Caco-2 (cell line): ENCODE measurements at regions of chr16 and their contacts with region 1.

Region 1: GRCh38 chr16:55944377-55944802 is 69.2 kb upstream of the CES5A start:
- DNase-seq: peak; percentile 67 to 82
- H3K4me3 ChIP-seq: no peak overlapping the region
- H3K4me3 Mint-ChIP-seq: no peak overlapping the region
- H3K27ac Mint-ChIP-seq: no peak overlapping the region
- H3K4me1 ChIP-seq: peaks cover 9% of the 10 kb centered on the region; the same call in 1 of the 2 replicates
- H3K4me1 Mint-ChIP-seq: peaks cover 9% of the 10 kb centered on the region
- H3K27me3 ChIP-seq: no peaks in the 10 kb centered on the region
- H3K27me3 Mint-ChIP-seq: peaks cover 16% of the 10 kb centered on the region
- CTCF ChIP-seq: peak; percentile 90 to 98

Region 2: GRCh38 chr16:55912022-55912421 is 32.4 kb before region 1 on chr16:
- CTCF ChIA-PET with region 1: no interaction called
- POLR2A ChIA-PET with region 1: no interaction called
- intact Hi-C with region 1: no loop called
- DNase-seq: no peak
- H3K4me3 ChIP-seq: no peak overlapping the region
- H3K4me3 Mint-ChIP-seq: no peak overlapping the region
- H3K27ac Mint-ChIP-seq: no peak overlapping the region
- H3K4me1 ChIP-seq: no peaks in the 10 kb centered on the region
- H3K4me1 Mint-ChIP-seq: peaks cover 12% of the 10 kb centered on the region
- H3K27me3 ChIP-seq: no peaks in the 10 kb centered on the region; the same call in 1 of the 2 replicates
- H3K27me3 Mint-ChIP-seq: peaks cover 26% of the 10 kb centered on the region
- CTCF ChIP-seq: no peak

Region 3: DNA sequence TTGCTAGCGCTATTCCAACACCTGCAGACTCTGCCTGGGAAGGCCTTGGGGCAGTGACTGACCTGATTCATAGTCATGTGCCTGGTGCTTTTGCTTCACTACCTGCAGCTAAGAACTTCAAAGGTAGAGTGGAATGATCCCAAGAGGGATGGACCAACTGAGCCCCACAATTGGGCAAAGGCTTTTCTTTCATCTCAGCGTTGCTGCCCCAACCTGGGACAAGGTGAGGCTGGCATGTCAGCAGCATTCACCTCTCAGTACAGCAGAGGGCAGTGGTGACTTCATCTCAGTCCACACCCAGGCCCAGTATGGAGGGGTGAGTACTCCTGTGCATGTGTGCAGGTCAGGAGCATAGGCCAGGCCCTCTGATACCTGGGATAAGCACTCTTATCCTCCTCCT is 97.3 kb after region 1 on chr16:
- CTCF ChIA-PET with region 1: interaction called, 3 read pairs
- POLR2A ChIA-PET with region 1: no interaction called
- intact Hi-C with region 1: loop called (anchors 2 kb)
- DNase-seq: peak; percentile 73 to 84
- H3K4me3 ChIP-seq: no peak overlapping the region
- H3K4me3 Mint-ChIP-seq: no peak overlapping the region
- H3K27ac Mint-ChIP-seq: no peak overlapping the region
- H3K4me1 ChIP-seq: no peaks in the 10 kb centered on the region
- H3K4me1 Mint-ChIP-seq: peaks cover 6% of the 10 kb centered on the region
- H3K27me3 ChIP-seq: no peaks in the 10 kb centered on the region
- H3K27me3 Mint-ChIP-seq: peaks cover 4% of the 10 kb centered on the region
- CTCF ChIP-seq: peak; percentile 57 to 64

Region 4: DNA sequence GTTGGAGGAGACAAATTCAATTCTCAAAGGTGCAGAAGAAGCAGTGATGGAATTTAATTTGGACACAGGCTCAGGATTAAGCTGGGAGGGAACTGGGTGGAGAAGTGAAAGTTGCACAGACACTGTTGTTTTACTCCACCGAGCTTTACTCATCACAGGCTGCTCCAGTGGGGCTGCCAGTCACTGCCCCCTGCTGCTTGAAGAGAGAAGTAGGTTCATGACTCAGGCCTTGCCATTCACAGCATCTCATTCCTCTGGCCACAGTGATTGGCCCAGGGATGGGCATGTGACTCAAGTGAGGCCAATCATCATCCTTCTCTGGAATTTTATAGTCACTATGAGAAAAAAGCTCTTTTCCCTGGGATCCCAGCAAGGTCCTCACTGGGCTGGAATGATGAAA is 258.7 kb after region 1 on chr16:
- CTCF ChIA-PET with region 1: no interaction called
- POLR2A ChIA-PET with region 1: no interaction called
- intact Hi-C with region 1: loop called (anchors 10 kb)
- DNase-seq: peak in 1 of 2 experiments; percentile 34
- H3K4me3 ChIP-seq: no peak overlapping the region
- H3K4me3 Mint-ChIP-seq: no peak overlapping the region
- H3K27ac Mint-ChIP-seq: no peak overlapping the region
- H3K4me1 ChIP-seq: no peaks in the 10 kb centered on the region
- H3K4me1 Mint-ChIP-seq: no peaks in the 10 kb centered on the region
- H3K27me3 ChIP-seq: no peaks in the 10 kb centered on the region
- H3K27me3 Mint-ChIP-seq: peaks cover 6% of the 10 kb centered on the region
- CTCF ChIP-seq: peak in 1 of 2 experiments; percentile 32

Region 5: GRCh38 chr16:56281256-56281805 is 336.9 kb after region 1 on chr16:
- CTCF ChIA-PET with region 1: interaction called, 3 read pairs
- POLR2A ChIA-PET with region 1: no interaction called
- intact Hi-C with region 1: loop called (anchors 2 kb)
- DNase-seq: peak in 1 of 2 experiments; percentile 38
- H3K4me3 ChIP-seq: no peak overlapping the region
- H3K4me3 Mint-ChIP-seq: no peak overlapping the region
- H3K27ac Mint-ChIP-seq: no peak overlapping the region
- H3K4me1 ChIP-seq: no peaks in the 10 kb centered on the region
- H3K4me1 Mint-ChIP-seq: no peaks in the 10 kb centered on the region
- H3K27me3 ChIP-seq: no peaks in the 10 kb centered on the region
- H3K27me3 Mint-ChIP-seq: no peaks in the 10 kb centered on the region
- CTCF ChIP-seq: peak; percentile 57 to 68